Gastrocnemius medialis (tissue), 4 donors: ENCODE measurements at regions of chr7 and their contacts with region 1.

Region 1: DNA sequence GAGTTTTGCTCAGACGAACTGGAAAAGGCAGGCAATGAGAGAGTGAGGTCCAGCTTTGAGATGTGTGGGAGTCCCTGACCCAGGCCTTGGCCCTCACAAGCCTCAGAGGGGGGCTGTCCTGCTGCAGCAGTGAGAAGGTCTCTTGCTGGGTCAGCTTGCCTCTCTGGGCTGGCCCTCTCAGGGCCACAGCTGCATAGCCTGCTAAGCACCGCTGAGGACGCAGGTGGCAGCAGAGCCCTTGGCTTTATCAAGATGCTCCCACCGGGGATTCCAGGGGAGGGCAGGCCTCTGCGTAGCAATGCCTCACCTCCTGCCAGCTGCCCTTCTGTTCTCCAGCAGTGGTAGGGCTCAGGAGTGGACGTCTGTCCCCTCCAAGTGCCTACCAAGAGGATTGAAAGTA is 128.7 kb downstream of the COBL start:
- DNase-seq: peak; percentile 38 to 63
- ATAC-seq: peak; percentile 67 to 69
- H3K4me3 ChIP-seq: no peak overlapping the region
- H3K27ac ChIP-seq: peak overlapping the region; percentile 41 to 67 (median 62)
- H3K4me1 ChIP-seq: peaks cover 8 to 12% of the 10 kb centered on the region in 2 donors
- H3K27me3 ChIP-seq: no peaks in the 10 kb centered on the region
- CTCF ChIP-seq: peak in 4 of 5 experiments; percentile 36 to 56 (median 45)
- POLR2A ChIP-seq: no peak

Region 2: GRCh38 chr7:50941525-50941924 is 246.4 kb before region 1 on chr7:
- in situ Hi-C with region 1: no loop called
- intact Hi-C with region 1: no loop called
- DNase-seq: no peak
- ATAC-seq: no peak
- H3K4me3 ChIP-seq: no peak overlapping the region
- H3K27ac ChIP-seq: no peak overlapping the region
- H3K4me1 ChIP-seq: no peaks in the 10 kb centered on the region
- H3K27me3 ChIP-seq: no peaks in the 10 kb centered on the region
- CTCF ChIP-seq: no peak
- POLR2A ChIP-seq: no peak

Region 3: DNA sequence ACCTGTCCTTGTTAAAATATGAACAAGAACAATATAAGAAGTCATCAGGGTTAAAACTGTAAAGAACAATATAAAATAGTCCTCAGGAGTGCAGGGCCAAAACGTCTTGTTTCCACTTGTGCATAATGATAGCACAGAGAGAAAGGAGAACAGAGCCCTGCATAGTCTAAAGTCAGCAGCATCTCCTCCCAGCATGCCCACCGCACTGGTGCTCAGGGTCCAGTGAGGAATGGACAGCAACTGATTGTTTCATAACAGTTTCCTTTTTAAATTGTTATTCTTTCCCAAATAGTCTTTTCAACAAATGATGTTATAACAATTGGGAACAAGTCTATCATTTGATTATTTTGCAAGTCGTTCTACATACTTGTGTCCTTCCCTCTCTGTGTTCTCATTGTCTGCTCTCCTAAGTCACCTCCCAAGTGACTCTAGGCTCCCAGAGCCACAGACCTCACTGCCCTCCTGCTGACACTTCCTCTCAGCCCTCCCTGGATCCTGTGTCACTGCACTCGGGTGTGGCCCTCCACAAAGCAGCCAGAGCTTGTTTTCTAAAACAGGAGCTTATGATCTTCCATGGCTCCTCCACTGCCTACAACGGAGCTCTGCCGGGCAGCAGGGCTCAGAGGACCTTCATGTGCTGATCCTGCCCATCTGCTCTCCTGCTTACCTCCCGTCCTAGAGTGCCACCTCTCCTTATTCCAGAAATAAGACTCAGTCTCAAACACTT is 101.1 kb after region 1 on chr7:
- in situ Hi-C with region 1: no loop called
- intact Hi-C with region 1: loop called (anchors 5 kb)
- DNase-seq: peak; percentile 35 to 64
- ATAC-seq: peak; percentile 63 to 81
- H3K4me3 ChIP-seq: peak overlapping the region; percentile 16 to 37 (median 26)
- H3K27ac ChIP-seq: peak overlapping the region; percentile 79 to 88 (median 84)
- H3K4me1 ChIP-seq: peaks cover 48 to 60% of the 10 kb centered on the region in 2 donors
- H3K27me3 ChIP-seq: no peaks in the 10 kb centered on the region
- CTCF ChIP-seq: no peak
- POLR2A ChIP-seq: peak in 1 of 2 donors; percentile 12

Region 4: GRCh38 chr7:51325261-51325676 is 137.3 kb after region 1 on chr7:
- in situ Hi-C with region 1: no loop called
- intact Hi-C with region 1: loop called (anchors 5 kb)
- DNase-seq: no peak
- ATAC-seq: no peak
- H3K4me3 ChIP-seq: no peak overlapping the region
- H3K27ac ChIP-seq: peak overlapping the region in 3 of 4 donors; percentile 51 to 71 (median 62)
- H3K4me1 ChIP-seq: peaks cover 4 to 20% of the 10 kb centered on the region in 2 donors
- H3K27me3 ChIP-seq: no peaks in the 10 kb centered on the region
- CTCF ChIP-seq: no peak
- POLR2A ChIP-seq: no peak

Region 5: DNA sequence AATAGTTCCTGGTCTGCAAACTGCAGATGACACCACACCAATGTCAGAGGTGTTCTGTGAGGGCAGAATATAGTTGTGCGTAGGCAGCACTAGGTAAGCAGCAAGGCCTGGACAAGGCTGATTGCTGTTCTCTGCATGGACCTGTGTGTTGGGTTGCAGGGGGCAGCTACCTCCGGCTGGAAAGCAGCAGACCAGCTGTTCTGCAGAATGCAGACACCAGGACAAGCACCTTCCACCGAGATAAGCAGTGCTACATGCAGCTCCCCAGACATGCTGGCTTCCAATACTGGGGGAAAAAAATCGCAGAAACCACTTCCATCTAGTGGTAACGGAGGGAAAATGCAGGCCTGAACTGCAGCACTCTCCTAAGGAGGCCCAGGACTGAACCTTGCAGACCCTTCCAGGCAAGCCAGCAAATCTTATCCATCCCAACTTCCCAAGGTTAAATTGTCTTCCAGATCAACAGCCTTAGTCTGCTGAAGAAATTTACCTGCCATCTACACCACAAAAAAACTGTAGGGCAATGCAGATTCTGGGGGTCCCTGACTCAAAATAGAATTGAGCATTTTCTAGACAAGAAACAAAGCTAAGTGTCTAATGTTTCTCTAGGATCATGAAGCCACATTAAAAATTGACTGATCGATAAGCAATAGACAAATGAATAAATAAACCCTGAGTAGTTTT is 179.1 kb after region 1 on chr7:
- in situ Hi-C with region 1: no loop called
- intact Hi-C with region 1: loop called (anchors 5 kb)
- DNase-seq: peak; percentile 9 to 29
- ATAC-seq: peak; percentile 89 to 96
- H3K4me3 ChIP-seq: no peak overlapping the region
- H3K27ac ChIP-seq: no peak overlapping the region
- H3K4me1 ChIP-seq: no peaks in the 10 kb centered on the region
- H3K27me3 ChIP-seq: no peaks in the 10 kb centered on the region
- CTCF ChIP-seq: peak; percentile 64 to 80 (median 75)
- POLR2A ChIP-seq: no peak